ENCODE measurements at regions of chr15 and their contacts with region 1.

Region 1: GRCh38 chr15:53384417-53384816 is 375.0 kb downstream of the WDR72 start:
- DNase-seq: no peak
- ATAC-seq: peak; percentile 55; the same call in 2 of the 3 replicates
- H3K4me3 ChIP-seq: no peak overlapping the region
- H3K27ac ChIP-seq: no peak overlapping the region
- H3K4me1 ChIP-seq: no peaks in the 10 kb centered on the region
- H3K27me3 ChIP-seq: no peaks in the 10 kb centered on the region
- CTCF ChIP-seq: peak; percentile 11 to 19 (median 16); a peak in 2 of 6 replicates
- EP300 ChIP-seq: no peak
- POLR2A ChIP-seq: no peak
- RAD21 ChIP-seq: no peak

Region 2: GRCh38 chr15:53716909-53717876 is 332.8 kb after region 1 on chr15:
- CTCF ChIA-PET with region 1: no interaction called
- POLR2A ChIA-PET with region 1: no interaction called
- RAD21 ChIA-PET with region 1: no interaction called
- SMC1A ChIA-PET with region 1: no interaction called
- in situ Hi-C with region 1: no loop called
- intact Hi-C with region 1: loop called (anchors 10 kb)
- DNase-seq: no peak
- ATAC-seq: peak; percentile 41; the same call in 1 of the 3 replicates
- H3K4me3 ChIP-seq: no peak overlapping the region
- H3K27ac ChIP-seq: no peak overlapping the region
- H3K4me1 ChIP-seq: no peaks in the 10 kb centered on the region
- H3K27me3 ChIP-seq: no peaks in the 10 kb centered on the region
- CTCF ChIP-seq: peak; percentile 16 to 35 (median 22); a peak in 3 of 6 replicates
- EP300 ChIP-seq: no peak
- POLR2A ChIP-seq: no peak
- RAD21 ChIP-seq: peak; percentile 33